B cell (primary cell): ENCODE measurements at regions of chr19 and their contacts with region 1.

Region 1: GRCh38 chr19:16417660-16418596 is 53.8 kb downstream of the EPS15L1 start:
- DNase-seq: peak; percentile 92
- ATAC-seq: peak; percentile 80
- H3K4me3 ChIP-seq: peak overlapping the region in 4 of 5 experiments; percentile 15 to 52 (median 35)
- H3K4me3 Mint-ChIP-seq: peak overlapping the region; percentile 65
- H3K27ac ChIP-seq: peak overlapping the region; percentile 90 to 97
- H3K27ac Mint-ChIP-seq: peak overlapping the region; percentile 96
- H3K4me1 ChIP-seq: peaks cover 31 to 43% of the 10 kb centered on the region in 2 donors
- H3K4me1 Mint-ChIP-seq: peaks cover 34% of the 10 kb centered on the region
- H3K27me3 ChIP-seq: no peaks in the 10 kb centered on the region
- H3K27me3 Mint-ChIP-seq: no peaks in the 10 kb centered on the region
- CTCF ChIP-seq: peak; percentile 97

Region 2: GRCh38 chr19:16041299-16041990 is 376.5 kb before region 1 on chr19:
- CTCF ChIA-PET with region 1: interaction called, 21 read pairs
- POLR2A ChIA-PET with region 1: no interaction called
- intact Hi-C with region 1: loop called (anchors 1 kb)
- DNase-seq: peak; percentile 80
- ATAC-seq: peak; percentile 86
- H3K4me3 ChIP-seq: no peak overlapping the region
- H3K4me3 Mint-ChIP-seq: no peak overlapping the region
- H3K27ac ChIP-seq: no peak overlapping the region
- H3K27ac Mint-ChIP-seq: no peak overlapping the region
- H3K4me1 ChIP-seq: peaks cover 7 to 8% of the 10 kb centered on the region in 2 donors
- H3K4me1 Mint-ChIP-seq: peaks cover 10% of the 10 kb centered on the region
- H3K27me3 ChIP-seq: peaks cover 0 to 4% (median 0%) of the 10 kb centered on the region in 4 experiments
- H3K27me3 Mint-ChIP-seq: no peaks in the 10 kb centered on the region
- CTCF ChIP-seq: peak; percentile 95

Region 3: GRCh38 chr19:16197622-16198369 is 220.1 kb before region 1 on chr19 and contains the start of gene AP1M1:
- CTCF ChIA-PET with region 1: interaction called, 17 read pairs
- POLR2A ChIA-PET with region 1: no interaction called
- intact Hi-C with region 1: loop called (anchors 1 kb)
- DNase-seq: peak; percentile 99
- ATAC-seq: peak; percentile 93
- H3K4me3 ChIP-seq: peak within 1 kb of the TSS; percentile 67 to 92 (median 87)
- H3K4me3 Mint-ChIP-seq: peak within 1 kb of the TSS; percentile 93
- H3K27ac ChIP-seq: peak within 1 kb of the TSS; percentile 66 to 92
- H3K27ac Mint-ChIP-seq: peak within 1 kb of the TSS; percentile 98
- H3K4me1 ChIP-seq: peaks cover 18 to 28% of the 10 kb centered on the region in 2 donors
- H3K4me1 Mint-ChIP-seq: peaks cover 35% of the 10 kb centered on the region
- H3K27me3 ChIP-seq: no peaks in the 10 kb centered on the region
- H3K27me3 Mint-ChIP-seq: no peaks in the 10 kb centered on the region
- CTCF ChIP-seq: no peak
- total RNA-seq, gene AP1M1: 90.4 and 102 TPM in 2 replicates

Region 4: DNA sequence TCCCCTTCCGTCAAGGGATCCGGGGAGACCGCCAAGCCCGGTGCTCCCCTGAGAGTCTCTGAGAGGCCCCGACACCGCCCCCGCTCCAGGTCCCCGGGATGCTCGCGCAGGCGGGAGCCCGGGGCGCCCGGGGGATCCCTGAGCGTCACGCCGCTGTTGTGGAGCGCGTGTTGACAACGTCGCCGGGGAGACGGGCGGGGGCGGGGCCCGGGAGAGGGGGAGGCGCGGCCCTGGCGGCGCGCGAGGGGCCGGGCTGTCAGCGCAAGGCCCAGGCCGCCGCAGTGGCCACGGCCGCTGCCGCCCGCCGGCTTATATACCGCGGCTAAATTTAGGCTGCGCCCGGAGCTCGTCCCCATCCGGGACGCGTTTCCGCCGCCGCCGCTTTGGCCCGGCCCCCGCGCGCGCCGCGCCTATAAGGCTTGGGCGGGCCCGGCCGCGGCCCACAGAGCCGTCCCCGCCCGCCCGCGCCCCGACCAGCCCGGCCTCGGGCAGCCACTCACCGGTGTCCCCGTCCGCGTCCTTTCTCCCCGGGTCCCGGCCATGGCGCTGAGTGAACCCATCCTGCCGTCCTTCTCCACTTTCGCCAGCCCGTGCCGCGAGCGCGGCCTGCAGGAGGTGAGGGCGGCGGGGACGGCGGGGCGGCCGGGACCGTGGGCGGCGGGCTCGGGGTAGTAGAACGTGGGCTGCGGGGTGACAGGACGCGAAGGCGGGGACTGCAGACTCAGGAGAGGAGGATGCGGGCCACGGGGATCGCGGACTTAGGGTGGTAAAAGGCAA is 93.4 kb before region 1 on chr19 and contains the start of gene KLF2:
- CTCF ChIA-PET with region 1: interaction called, 81 read pairs
- POLR2A ChIA-PET with region 1: interaction called, 67 read pairs
- intact Hi-C with region 1: loop called (anchors 1 kb)
- DNase-seq: peak; percentile 99
- ATAC-seq: peak; percentile 59
- H3K4me3 ChIP-seq: peak within 1 kb of the TSS; percentile 35 to 100 (median 98)
- H3K4me3 Mint-ChIP-seq: peak within 1 kb of the TSS; percentile 76
- H3K27ac ChIP-seq: peak within 1 kb of the TSS; percentile 99
- H3K27ac Mint-ChIP-seq: peak within 1 kb of the TSS; percentile 91
- H3K4me1 ChIP-seq: peaks cover 42 to 55% of the 10 kb centered on the region in 2 donors
- H3K4me1 Mint-ChIP-seq: peaks cover 61% of the 10 kb centered on the region
- H3K27me3 ChIP-seq: no peaks in the 10 kb centered on the region
- H3K27me3 Mint-ChIP-seq: no peaks in the 10 kb centered on the region
- CTCF ChIP-seq: no peak
- total RNA-seq, gene KLF2: 241 and 242 TPM in 2 replicates

Region 5: GRCh38 chr19:16371540-16371986 is 46.4 kb before region 1 on chr19:
- CTCF ChIA-PET with region 1: interaction called, 47 read pairs
- POLR2A ChIA-PET with region 1: interaction called, 36 read pairs
- intact Hi-C with region 1: loop called (anchors 2 kb)
- DNase-seq: peak; percentile 93
- ATAC-seq: peak; percentile 73
- H3K4me3 ChIP-seq: peak overlapping the region; percentile 15 to 47 (median 19)
- H3K4me3 Mint-ChIP-seq: no peak overlapping the region
- H3K27ac ChIP-seq: peak overlapping the region; percentile 85 to 94
- H3K27ac Mint-ChIP-seq: no peak overlapping the region
- H3K4me1 ChIP-seq: peaks cover 94 to 100% of the 10 kb centered on the region in 2 donors
- H3K4me1 Mint-ChIP-seq: peaks cover 38% of the 10 kb centered on the region
- H3K27me3 ChIP-seq: no peaks in the 10 kb centered on the region
- H3K27me3 Mint-ChIP-seq: no peaks in the 10 kb centered on the region
- CTCF ChIP-seq: peak; percentile 27

Region 6: DNA sequence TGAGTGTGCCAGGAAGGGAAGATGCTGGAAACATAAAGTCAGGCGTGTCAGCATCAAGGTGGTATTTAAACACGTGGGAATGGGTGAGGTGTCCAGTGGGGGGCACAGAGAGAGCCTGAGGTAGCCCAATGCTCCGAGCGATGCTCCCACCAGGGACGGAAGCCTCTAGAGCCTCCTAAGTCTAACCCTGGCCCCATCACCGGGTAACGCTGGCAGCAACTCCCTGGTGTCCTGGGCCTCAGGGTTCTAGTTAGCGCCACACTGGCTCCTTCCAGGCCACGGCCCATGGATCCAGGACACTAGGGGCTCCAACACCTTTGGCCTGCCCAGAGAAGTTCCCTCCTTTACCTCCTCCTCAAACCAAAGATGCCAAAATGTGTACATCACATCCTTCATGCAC is 11.6 kb before region 1 on chr19:
- CTCF ChIA-PET with region 1: interaction called, 16 read pairs
- POLR2A ChIA-PET with region 1: no interaction called
- intact Hi-C with region 1: no loop called
- DNase-seq: no peak
- ATAC-seq: no peak
- H3K4me3 ChIP-seq: no peak overlapping the region
- H3K4me3 Mint-ChIP-seq: no peak overlapping the region
- H3K27ac ChIP-seq: no peak overlapping the region
- H3K27ac Mint-ChIP-seq: no peak overlapping the region
- H3K4me1 ChIP-seq: peaks cover 11 to 19% of the 10 kb centered on the region in 2 donors
- H3K4me1 Mint-ChIP-seq: peaks cover 35% of the 10 kb centered on the region
- H3K27me3 ChIP-seq: no peaks in the 10 kb centered on the region
- H3K27me3 Mint-ChIP-seq: no peaks in the 10 kb centered on the region
- CTCF ChIP-seq: no peak

Region 7: DNA sequence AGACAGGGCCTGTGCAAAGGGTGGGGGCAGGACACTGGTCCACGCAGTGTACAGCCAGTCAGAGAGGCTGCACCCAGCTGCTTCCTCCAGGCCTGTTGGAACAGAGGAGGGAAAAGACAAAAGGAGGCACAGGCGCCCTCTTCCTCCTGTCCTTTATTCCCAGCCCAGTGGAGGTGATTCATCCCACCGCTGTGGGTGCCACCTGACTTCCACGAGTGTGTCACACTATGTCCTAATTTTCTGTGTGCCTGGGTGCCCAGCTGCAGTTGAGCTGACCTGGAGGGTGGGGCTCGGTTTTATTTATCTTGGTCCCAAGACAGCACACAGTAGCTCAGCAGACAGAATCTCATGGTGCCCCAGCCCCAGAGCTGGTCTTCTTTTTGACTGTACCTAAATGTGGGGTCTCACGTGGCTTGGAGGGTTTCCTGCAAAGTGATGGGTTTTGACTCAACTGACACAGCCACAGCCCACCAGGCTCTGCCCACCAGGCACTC is 44.9 kb after region 1 on chr19:
- CTCF ChIA-PET with region 1: no interaction called
- POLR2A ChIA-PET with region 1: no interaction called
- intact Hi-C with region 1: no loop called
- DNase-seq: no peak
- ATAC-seq: no peak
- H3K4me3 ChIP-seq: no peak overlapping the region
- H3K4me3 Mint-ChIP-seq: no peak overlapping the region
- H3K27ac ChIP-seq: no peak overlapping the region
- H3K27ac Mint-ChIP-seq: no peak overlapping the region
- H3K4me1 ChIP-seq: peaks cover 28 to 34% of the 10 kb centered on the region in 2 donors
- H3K4me1 Mint-ChIP-seq: peaks cover 74% of the 10 kb centered on the region
- H3K27me3 ChIP-seq: no peaks in the 10 kb centered on the region
- H3K27me3 Mint-ChIP-seq: no peaks in the 10 kb centered on the region
- CTCF ChIP-seq: no peak